OCI-LY7 (cell line): ENCODE measurements at regions of chr3 and their contacts with region 1.

Region 1: DNA sequence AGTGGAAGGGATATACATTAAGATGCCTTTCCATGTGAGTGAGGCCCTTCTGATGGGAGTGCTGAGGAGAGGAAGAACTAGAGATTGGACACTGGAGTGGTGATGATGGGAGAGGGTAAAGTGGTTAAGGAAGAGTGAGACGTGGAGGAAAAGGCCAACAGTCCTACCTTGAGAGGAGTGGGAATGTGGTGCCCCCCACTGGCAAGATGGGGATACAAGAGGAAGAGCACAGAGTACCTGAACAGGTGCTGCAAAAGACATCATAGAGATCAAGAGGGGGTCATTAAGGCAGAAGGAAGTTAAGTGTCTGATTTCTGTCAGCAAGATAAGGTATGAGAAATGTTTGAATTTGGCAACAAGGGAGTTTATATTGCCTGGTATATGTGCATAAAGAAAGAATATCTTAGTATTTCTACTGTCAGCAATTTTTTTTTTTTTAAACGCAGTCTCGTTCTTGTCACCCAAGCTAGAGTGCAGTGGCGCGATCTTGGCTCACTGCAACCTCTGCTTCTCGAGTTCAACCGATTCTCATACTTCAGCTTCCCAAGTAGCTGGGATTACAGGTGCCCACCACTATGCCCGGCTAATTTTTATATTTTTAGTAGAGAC is 34.0 kb downstream of the ARIH2 start:
- DNase-seq: peak; percentile 47
- H3K4me3 ChIP-seq: no peak overlapping the region
- H3K27ac ChIP-seq: no peak overlapping the region
- H3K4me1 ChIP-seq: no peaks in the 10 kb centered on the region
- CTCF ChIP-seq: peak; percentile 79

Region 2: DNA sequence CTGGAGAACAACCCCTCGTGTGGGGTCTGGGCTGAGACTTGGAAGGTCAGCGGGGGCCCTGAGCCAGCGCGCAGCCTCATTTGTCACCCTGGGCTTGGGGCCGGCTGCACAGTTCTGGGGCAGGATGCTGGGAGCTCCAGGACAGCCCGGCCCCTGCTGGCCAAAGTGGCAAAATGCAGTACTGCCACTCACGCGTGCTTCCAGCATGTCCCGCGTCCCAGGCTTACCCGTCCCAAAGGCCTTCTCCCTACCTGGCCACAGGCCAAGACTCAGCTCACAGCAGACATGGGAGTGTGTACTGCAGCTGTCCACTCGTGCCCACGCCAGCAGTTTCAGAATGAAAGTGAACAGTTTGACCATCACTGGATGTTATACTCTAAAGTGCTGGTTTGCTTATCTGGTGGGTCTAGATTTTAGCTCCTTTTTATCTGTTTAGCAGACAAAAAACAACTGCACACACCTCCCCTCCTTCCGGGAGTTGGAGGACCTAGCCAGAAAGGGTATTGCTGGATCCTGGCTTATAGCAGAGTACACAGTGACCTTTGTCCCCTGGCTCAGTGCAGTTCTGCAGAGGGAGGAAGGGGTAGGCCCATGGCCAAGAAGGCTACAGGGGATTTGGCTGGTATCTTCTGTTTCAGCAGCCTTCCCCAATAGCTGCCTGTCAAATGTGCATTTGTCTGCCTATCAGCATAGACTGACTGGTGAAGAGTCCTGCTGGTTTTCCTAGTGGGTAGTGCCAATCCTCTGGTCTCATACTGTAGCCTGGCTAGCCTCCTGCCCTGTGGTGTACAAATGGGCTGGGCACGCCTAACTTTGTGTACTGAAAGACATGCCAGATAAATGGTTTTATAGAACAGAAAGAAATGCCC is 212.4 kb before region 1 on chr3:
- CTCF ChIA-PET with region 1: no interaction called
- POLR2A ChIA-PET with region 1: no interaction called
- intact Hi-C with region 1: loop called (anchors 1 kb)
- DNase-seq: peak; percentile 68
- H3K4me3 ChIP-seq: no peak overlapping the region
- H3K27ac ChIP-seq: no peak overlapping the region
- H3K4me1 ChIP-seq: peaks cover 5% of the 10 kb centered on the region
- CTCF ChIP-seq: peak; percentile 84

Region 3: DNA sequence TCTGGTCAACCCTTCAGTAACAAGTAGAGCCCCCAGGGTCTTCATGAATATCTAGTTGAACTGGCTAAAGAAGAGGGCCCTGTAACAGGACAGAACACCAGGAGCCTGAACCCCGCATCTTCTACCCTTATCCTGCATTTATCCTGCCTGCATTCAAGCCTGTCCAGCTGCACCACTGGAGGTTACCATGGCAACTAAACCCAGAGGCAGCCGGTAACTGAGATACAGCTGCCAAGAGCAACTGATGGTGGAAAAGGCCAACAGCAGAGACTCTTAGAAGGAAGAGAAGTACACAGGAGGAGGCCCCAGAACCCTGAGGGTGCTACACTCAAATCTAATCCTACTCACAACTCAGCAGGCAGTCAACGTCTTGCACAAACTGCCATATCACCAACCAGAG is 101.2 kb before region 1 on chr3:
- CTCF ChIA-PET with region 1: no interaction called
- POLR2A ChIA-PET with region 1: no interaction called
- intact Hi-C with region 1: no loop called
- DNase-seq: peak; percentile 21
- H3K4me3 ChIP-seq: no peak overlapping the region
- H3K27ac ChIP-seq: no peak overlapping the region
- H3K4me1 ChIP-seq: peaks cover 20% of the 10 kb centered on the region
- CTCF ChIP-seq: no peak